Mammary epithelial cell (primary cell): ENCODE measurements at regions of chr17 and their contacts with region 1.

Region 1: GRCh38 chr17:35141681-35142466 is at the start of gene NLE1:
- DNase-seq: peak; percentile 72
- H3K4me3 ChIP-seq: peak within 1 kb of the TSS; percentile 68 to 98 (median 85)
- H3K27ac ChIP-seq: peak within 1 kb of the TSS; percentile 20
- H3K4me1 ChIP-seq: no peaks in the 10 kb centered on the region
- H3K27me3 ChIP-seq: no peaks in the 10 kb centered on the region
- CTCF ChIP-seq: peak; percentile 77 to 93
- total RNA-seq, gene NLE1: 22.2 to 27.4 TPM

Region 2: GRCh38 chr17:34199932-34200534 is 941.8 kb before region 1 on chr17:
- CTCF ChIA-PET with region 1: no interaction called
- dilution Hi-C with region 1: no loop called
- in situ Hi-C with region 1: loop called in 1 of 2 experiments (anchors 25 kb)
- intact Hi-C with region 1: no loop called
- DNase-seq: peak; percentile 50
- H3K4me3 ChIP-seq: no peak overlapping the region
- H3K27ac ChIP-seq: no peak overlapping the region
- H3K4me1 ChIP-seq: no peaks in the 10 kb centered on the region
- H3K27me3 ChIP-seq: no peaks in the 10 kb centered on the region
- CTCF ChIP-seq: peak; percentile 100